Transverse colon (tissue), 4 donors: ENCODE measurements at regions of chr9 and their contacts with region 1.

Region 1: GRCh38 chr9:1429297-1429696 is 379.1 kb downstream of the DMRT2 start:
- DNase-seq: peak; percentile 17
- H3K4me3 ChIP-seq: no peak overlapping the region
- H3K27ac ChIP-seq: no peak overlapping the region
- H3K4me1 ChIP-seq: no peaks in the 10 kb centered on the region
- H3K27me3 ChIP-seq: no peaks in the 10 kb centered on the region
- CTCF ChIP-seq: peak in 4 of 5 experiments; percentile 19 to 41 (median 28)
- EP300 ChIP-seq: no peak
- POLR2A ChIP-seq: no peak

Region 2: GRCh38 chr9:1083325-1083913 is 345.9 kb before region 1 on chr9:
- in situ Hi-C with region 1: loop called in 1 of 4 experiments (anchors 25 kb)
- intact Hi-C with region 1: no loop called
- DNase-seq: peak; percentile 26
- H3K4me3 ChIP-seq: peak overlapping the region in 1 of 4 donors; percentile 34
- H3K27ac ChIP-seq: no peak overlapping the region
- H3K4me1 ChIP-seq: no peaks in the 10 kb centered on the region
- H3K27me3 ChIP-seq: peaks cover 13% of the 10 kb centered on the region
- CTCF ChIP-seq: no peak
- EP300 ChIP-seq: no peak
- POLR2A ChIP-seq: no peak

Region 3: GRCh38 chr9:1100945-1101344 is 328.4 kb before region 1 on chr9:
- in situ Hi-C with region 1: loop called in 2 of 4 experiments (anchors 25 kb)
- intact Hi-C with region 1: no loop called
- DNase-seq: peak; percentile 50
- H3K4me3 ChIP-seq: no peak overlapping the region
- H3K27ac ChIP-seq: no peak overlapping the region
- H3K4me1 ChIP-seq: no peaks in the 10 kb centered on the region
- H3K27me3 ChIP-seq: peaks cover 2% of the 10 kb centered on the region
- CTCF ChIP-seq: peak; percentile 41 to 63 (median 52)
- EP300 ChIP-seq: no peak
- POLR2A ChIP-seq: no peak